ENCODE measurements at regions of chr7 and their contacts with region 1.

Region 1: DNA sequence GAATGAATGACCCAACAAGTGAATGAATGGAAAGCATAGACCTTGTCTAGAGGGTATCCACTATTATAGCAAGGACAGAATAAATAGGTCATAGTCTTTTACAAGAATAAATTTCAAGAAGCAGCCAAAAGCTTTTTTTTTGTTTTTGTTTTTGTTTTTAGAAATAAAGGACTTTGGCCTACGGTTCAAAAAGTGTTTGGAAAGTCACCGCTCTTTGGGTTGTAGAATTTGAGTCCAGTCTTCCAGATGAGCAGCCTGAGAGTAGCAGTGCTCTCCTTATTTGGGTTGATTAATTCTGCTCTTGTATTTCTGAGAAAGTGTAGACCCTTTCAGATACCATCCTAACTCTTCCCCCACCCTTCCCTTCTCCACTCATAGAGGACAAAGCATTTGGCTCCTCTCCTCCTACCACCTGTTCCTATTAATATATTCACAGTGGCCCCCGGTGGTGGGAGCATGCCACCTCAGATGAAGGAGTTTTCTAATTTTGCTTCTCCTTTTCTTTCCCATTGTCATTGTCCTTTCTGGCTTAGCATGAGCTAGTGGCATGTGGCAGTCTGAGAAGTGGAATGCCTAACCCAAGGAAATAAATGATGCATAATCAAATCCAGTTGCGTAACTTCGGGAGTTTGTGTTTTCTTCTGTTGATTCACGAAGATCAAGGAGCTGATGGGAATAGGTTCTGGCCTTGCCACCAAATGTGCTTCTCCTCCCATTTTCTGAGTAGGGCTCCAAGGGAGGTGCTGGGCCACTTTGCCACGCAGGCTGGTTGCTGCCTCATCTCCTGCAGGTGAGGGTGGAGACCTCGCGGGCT is 114.7 kb downstream of the CHN2 start:
- DNase-seq: peak; percentile 50 to 64
- H3K4me3 ChIP-seq: no peak overlapping the region
- H3K4me3 Mint-ChIP-seq: no peak overlapping the region
- H3K27ac Mint-ChIP-seq: no peak overlapping the region
- H3K4me1 ChIP-seq: peaks cover 45% of the 10 kb centered on the region
- H3K4me1 Mint-ChIP-seq: peaks cover 41% of the 10 kb centered on the region
- H3K27me3 ChIP-seq: no peaks in the 10 kb centered on the region
- H3K27me3 Mint-ChIP-seq: no peaks in the 10 kb centered on the region
- CTCF ChIP-seq: peak; percentile 59 to 70

Region 2: GRCh38 chr7:29189743-29190201 is 119.5 kb before region 1 on chr7:
- CTCF ChIA-PET with region 1: interaction called, 12 read pairs
- POLR2A ChIA-PET with region 1: interaction called, 3 read pairs
- intact Hi-C with region 1: loop called (anchors 1 kb)
- DNase-seq: peak; percentile 87 to 88
- H3K4me3 ChIP-seq: no peak overlapping the region
- H3K4me3 Mint-ChIP-seq: peak overlapping the region; percentile 60
- H3K27ac Mint-ChIP-seq: peak overlapping the region; percentile 18
- H3K4me1 ChIP-seq: peaks cover 26% of the 10 kb centered on the region
- H3K4me1 Mint-ChIP-seq: peaks cover 19% of the 10 kb centered on the region
- H3K27me3 ChIP-seq: no peaks in the 10 kb centered on the region
- H3K27me3 Mint-ChIP-seq: no peaks in the 10 kb centered on the region
- CTCF ChIP-seq: peak; percentile 91 to 96

Region 3: DNA sequence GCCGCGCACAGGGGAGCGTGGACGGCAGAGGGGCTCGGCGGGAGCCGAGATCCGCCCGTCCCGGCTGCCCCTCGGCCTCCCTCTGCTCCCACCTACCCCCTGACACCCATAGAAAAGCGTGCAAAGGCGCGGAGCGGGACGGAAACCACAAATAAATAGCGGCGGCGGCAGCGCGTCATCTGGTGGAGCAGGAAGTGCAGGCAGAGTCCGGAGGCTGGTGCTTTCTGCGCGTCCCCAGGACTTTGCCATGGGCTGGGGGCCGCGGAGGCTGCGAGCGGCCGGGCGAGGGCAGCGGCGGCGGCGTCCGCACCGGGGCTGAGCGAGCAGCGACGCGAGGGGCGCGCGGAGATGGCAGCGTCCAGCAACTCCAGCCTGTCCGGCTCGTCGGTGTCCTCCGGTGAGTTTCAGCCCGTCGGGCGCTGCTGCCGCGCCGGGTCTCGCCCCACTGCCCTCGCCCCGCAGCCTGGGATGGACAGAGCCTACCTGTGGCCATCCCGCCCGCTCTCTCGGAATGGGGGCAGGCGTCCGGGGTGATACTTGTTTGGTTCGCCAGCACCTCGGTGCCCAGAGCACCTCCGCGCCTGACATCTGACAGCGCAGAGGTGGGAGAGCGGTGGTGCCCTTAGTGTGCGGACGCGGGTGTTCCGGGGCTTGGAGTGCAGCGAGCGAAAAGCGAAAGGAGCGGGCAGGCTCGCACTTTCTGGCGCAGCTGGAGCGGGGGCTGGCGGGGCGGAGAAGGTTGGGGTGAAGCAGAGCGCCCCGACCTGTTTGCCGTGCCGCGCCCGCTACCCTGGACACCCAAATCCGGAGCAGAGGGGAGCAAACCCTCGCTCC is 114.4 kb before region 1 on chr7 and contains the start of gene CHN2:
- CTCF ChIA-PET with region 1: interaction called, 12 read pairs
- POLR2A ChIA-PET with region 1: interaction called, 3 read pairs
- intact Hi-C with region 1: loop called (anchors 1 kb)
- DNase-seq: peak; percentile 74 to 75
- H3K4me3 ChIP-seq: peak within 1 kb of the TSS; percentile 91
- H3K4me3 Mint-ChIP-seq: peak within 1 kb of the TSS; percentile 72
- H3K27ac Mint-ChIP-seq: peak within 1 kb of the TSS; percentile 1
- H3K4me1 ChIP-seq: peaks cover 32% of the 10 kb centered on the region
- H3K4me1 Mint-ChIP-seq: peaks cover 25% of the 10 kb centered on the region
- H3K27me3 ChIP-seq: no peaks in the 10 kb centered on the region
- H3K27me3 Mint-ChIP-seq: no peaks in the 10 kb centered on the region
- CTCF ChIP-seq: no peak
- total RNA-seq, gene CHN2: 16.5 and 18.8 TPM in 2 replicates

Region 4: GRCh38 chr7:29228289-29229011 is 80.8 kb before region 1 on chr7:
- CTCF ChIA-PET with region 1: no interaction called
- POLR2A ChIA-PET with region 1: no interaction called
- intact Hi-C with region 1: no loop called
- DNase-seq: peak in 1 of 2 experiments; percentile 30
- H3K4me3 ChIP-seq: no peak overlapping the region
- H3K4me3 Mint-ChIP-seq: no peak overlapping the region
- H3K27ac Mint-ChIP-seq: no peak overlapping the region
- H3K4me1 ChIP-seq: peaks cover 17% of the 10 kb centered on the region
- H3K4me1 Mint-ChIP-seq: peaks cover 19% of the 10 kb centered on the region
- H3K27me3 ChIP-seq: no peaks in the 10 kb centered on the region
- H3K27me3 Mint-ChIP-seq: no peaks in the 10 kb centered on the region
- CTCF ChIP-seq: no peak

Region 5: DNA sequence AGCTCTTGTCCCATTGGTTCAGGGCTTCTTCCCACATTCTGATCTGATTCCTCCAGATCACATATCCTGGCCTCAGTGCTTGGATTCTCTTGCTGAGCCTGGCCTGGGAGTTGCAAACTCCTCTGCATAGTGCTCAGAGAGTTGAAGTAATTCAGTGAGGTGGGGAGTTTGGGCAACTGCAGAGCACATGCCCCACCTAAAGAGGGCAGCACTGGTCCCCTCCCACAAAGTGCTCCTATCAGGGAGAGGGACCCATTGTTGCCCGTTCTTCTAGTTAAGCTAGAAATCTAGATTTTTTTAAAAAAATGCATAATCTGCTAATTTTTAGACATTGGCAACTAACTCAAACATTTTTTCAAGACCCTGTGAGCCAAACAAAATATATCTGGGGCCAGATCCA is 69.6 kb before region 1 on chr7:
- CTCF ChIA-PET with region 1: no interaction called
- POLR2A ChIA-PET with region 1: no interaction called
- intact Hi-C with region 1: loop called (anchors 5 kb)
- DNase-seq: peak in 1 of 2 experiments; percentile 28
- H3K4me3 ChIP-seq: no peak overlapping the region
- H3K4me3 Mint-ChIP-seq: no peak overlapping the region
- H3K27ac Mint-ChIP-seq: no peak overlapping the region
- H3K4me1 ChIP-seq: peaks cover 12% of the 10 kb centered on the region; the same call in 1 of the 2 replicates
- H3K4me1 Mint-ChIP-seq: no peaks in the 10 kb centered on the region
- H3K27me3 ChIP-seq: no peaks in the 10 kb centered on the region
- H3K27me3 Mint-ChIP-seq: no peaks in the 10 kb centered on the region
- CTCF ChIP-seq: peak; percentile 30 to 54

Region 6: DNA sequence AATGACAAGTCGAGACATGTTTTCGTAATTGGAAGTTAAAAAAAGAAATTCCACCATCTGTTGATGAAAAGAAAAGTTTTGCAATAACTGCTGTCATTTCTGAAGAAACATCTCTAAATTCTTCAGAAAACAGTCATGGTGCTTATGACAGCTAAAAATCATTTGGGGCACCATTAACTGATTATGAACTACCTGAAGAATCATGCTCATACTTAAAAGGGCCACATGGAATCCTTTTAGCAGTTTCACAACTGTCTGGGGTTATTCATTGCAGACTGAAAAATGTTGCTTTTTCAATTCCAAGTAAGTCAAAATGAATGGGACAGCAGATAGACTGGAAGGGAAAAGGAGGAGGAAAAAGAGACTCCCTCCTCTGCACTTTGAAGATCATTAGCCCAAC is 19.6 kb after region 1 on chr7:
- CTCF ChIA-PET with region 1: interaction called, 5 read pairs
- POLR2A ChIA-PET with region 1: no interaction called
- intact Hi-C with region 1: loop called (anchors 2 kb)
- DNase-seq: no peak
- H3K4me3 ChIP-seq: no peak overlapping the region
- H3K4me3 Mint-ChIP-seq: no peak overlapping the region
- H3K27ac Mint-ChIP-seq: no peak overlapping the region
- H3K4me1 ChIP-seq: peaks cover 27% of the 10 kb centered on the region
- H3K4me1 Mint-ChIP-seq: peaks cover 27% of the 10 kb centered on the region
- H3K27me3 ChIP-seq: no peaks in the 10 kb centered on the region
- H3K27me3 Mint-ChIP-seq: no peaks in the 10 kb centered on the region
- CTCF ChIP-seq: no peak